A549 (cell line): ENCODE measurements at regions of chr17 and their contacts with region 1.

Region 1: DNA sequence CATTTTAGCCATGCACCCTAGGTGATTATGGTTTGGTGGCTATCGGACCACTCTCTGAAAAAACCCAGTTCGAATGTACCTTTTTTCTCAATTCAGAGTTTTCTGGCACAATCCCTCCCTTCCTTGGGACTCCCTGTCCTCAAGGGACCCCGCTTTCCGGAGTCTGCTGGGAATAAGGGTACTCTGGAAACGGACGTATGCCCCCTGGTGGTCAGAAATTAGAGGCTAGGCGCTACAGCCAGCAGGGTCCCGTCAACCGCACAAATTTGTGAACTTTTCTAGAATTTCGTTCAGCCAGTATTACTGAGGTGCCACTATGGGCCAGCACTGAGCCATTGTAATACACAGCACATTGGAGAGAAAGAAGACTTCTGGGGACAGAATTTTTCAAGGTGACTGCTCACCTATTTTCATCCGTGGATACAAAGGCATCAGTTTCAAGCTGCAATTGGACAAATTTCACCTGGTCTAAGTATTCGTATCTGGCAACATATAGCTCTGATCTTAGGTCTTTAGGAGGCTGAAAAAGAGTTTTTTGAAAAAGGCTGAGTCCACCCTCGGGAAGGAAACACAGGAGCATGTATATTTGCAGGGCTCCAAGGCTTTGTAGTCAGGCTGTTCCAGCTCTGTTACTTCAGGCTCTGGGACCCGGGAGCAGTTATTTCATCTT is 27.1 kb upstream of the CRYBA1 start:
- DNase-seq: peak; percentile 86 to 97
- ATAC-seq: peak; percentile 97 to 99
- H3K4me3 ChIP-seq: no peak overlapping the region
- H3K27ac ChIP-seq: peak overlapping the region; percentile 5 to 67; a peak in 3 of 6 replicates
- H3K4me1 ChIP-seq: 0 out of 3 replicates have a peak, but pooled peaks cover 6% of the 10 kb centered on the region
- CTCF ChIP-seq: peak; percentile 99
- EP300 ChIP-seq: no peak
- POLR2A ChIP-seq: no peak
- RAD21 ChIP-seq: peak; percentile 87 to 94

Region 2: GRCh38 chr17:28371245-28372202 is 848.0 kb before region 1 on chr17 and contains the start of gene SARM1:
- CTCF ChIA-PET with region 1: no interaction called
- POLR2A ChIA-PET with region 1: no interaction called
- DNase-seq: peak; percentile 94 to 95
- ATAC-seq: peak; percentile 71 to 90
- H3K4me3 ChIP-seq: peak within 1 kb of the TSS; percentile 57
- H3K27ac ChIP-seq: peak within 1 kb of the TSS; percentile 83 to 87
- H3K4me1 ChIP-seq: peaks cover 30% of the 10 kb centered on the region
- CTCF ChIP-seq: no peak
- EP300 ChIP-seq: no peak
- POLR2A ChIP-seq: peak; percentile 38
- RAD21 ChIP-seq: no peak
- polyA plus RNA-seq, gene SARM1: 4.0 and 4.8 TPM in 2 replicates

Region 3: GRCh38 chr17:28878981-28879380 is 340.5 kb before region 1 on chr17:
- CTCF ChIA-PET with region 1: no interaction called
- POLR2A ChIA-PET with region 1: no interaction called
- DNase-seq: peak; percentile 81 to 90
- ATAC-seq: peak; percentile 77 to 96
- H3K4me3 ChIP-seq: no peak overlapping the region
- H3K27ac ChIP-seq: no peak overlapping the region
- H3K4me1 ChIP-seq: no peaks in the 10 kb centered on the region
- CTCF ChIP-seq: peak; percentile 48
- EP300 ChIP-seq: no peak
- POLR2A ChIP-seq: no peak
- RAD21 ChIP-seq: peak; percentile 67 to 88

Region 4: GRCh38 chr17:29124117-29124924 is 95.2 kb before region 1 on chr17:
- CTCF ChIA-PET with region 1: interaction called, 81 read pairs
- POLR2A ChIA-PET with region 1: no interaction called
- DNase-seq: peak; percentile 82 to 83
- ATAC-seq: peak; percentile 83 to 93
- H3K4me3 ChIP-seq: no peak overlapping the region
- H3K27ac ChIP-seq: peak overlapping the region in 1 of 2 experiments; percentile 39; a peak in 3 of 6 replicates
- H3K4me1 ChIP-seq: peaks cover 16% of the 10 kb centered on the region
- CTCF ChIP-seq: peak; percentile 88
- EP300 ChIP-seq: no peak
- POLR2A ChIP-seq: no peak
- RAD21 ChIP-seq: peak; percentile 88 to 96

Region 5: DNA sequence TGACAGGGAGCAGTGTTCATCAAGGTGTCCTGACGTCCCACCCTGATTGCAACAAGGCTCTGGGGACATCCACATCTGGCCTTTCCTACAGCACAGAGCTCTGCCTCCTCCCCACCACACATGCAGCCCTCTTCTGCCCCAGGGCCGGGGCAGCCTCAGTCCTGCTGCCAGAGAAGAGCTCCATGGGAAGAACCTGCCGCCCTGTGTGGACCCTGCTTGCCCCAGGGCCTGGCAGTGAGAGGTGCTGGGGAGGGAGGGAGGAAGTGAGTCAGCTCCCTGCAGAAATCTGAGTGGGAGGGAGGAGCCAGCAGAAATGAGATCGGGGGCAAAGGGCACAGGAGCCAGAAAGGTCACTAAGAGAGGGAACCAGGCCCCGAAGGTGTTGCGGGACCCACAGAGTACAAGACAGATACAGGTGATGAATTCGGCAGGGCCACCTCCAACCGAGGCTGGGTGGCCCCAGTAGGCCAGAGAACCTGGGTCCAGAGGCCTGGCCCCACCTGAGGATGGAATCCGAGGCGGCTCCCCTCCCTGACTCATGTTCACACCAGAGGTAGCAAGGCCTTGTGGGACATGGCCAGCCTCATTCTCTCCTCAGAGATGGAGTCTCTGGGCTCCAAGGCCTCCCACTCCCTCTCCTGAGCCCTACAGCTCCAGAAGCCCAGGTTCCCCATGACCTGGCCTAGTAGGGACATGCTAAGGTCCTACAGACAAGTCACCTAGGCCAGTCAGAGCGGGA is 64.1 kb before region 1 on chr17:
- CTCF ChIA-PET with region 1: interaction called, 482 read pairs
- POLR2A ChIA-PET with region 1: no interaction called
- DNase-seq: peak; percentile 85 to 90
- ATAC-seq: peak; percentile 75 to 86
- H3K4me3 ChIP-seq: no peak overlapping the region
- H3K27ac ChIP-seq: peak overlapping the region; percentile 81 to 94
- H3K4me1 ChIP-seq: peaks cover 95% of the 10 kb centered on the region
- CTCF ChIP-seq: no peak
- EP300 ChIP-seq: peak in 1 of 2 experiments; percentile 41; a peak in 1 of 5 replicates
- POLR2A ChIP-seq: peak; percentile 19; the same call in 1 of the 2 replicates
- RAD21 ChIP-seq: no peak

Region 6: DNA sequence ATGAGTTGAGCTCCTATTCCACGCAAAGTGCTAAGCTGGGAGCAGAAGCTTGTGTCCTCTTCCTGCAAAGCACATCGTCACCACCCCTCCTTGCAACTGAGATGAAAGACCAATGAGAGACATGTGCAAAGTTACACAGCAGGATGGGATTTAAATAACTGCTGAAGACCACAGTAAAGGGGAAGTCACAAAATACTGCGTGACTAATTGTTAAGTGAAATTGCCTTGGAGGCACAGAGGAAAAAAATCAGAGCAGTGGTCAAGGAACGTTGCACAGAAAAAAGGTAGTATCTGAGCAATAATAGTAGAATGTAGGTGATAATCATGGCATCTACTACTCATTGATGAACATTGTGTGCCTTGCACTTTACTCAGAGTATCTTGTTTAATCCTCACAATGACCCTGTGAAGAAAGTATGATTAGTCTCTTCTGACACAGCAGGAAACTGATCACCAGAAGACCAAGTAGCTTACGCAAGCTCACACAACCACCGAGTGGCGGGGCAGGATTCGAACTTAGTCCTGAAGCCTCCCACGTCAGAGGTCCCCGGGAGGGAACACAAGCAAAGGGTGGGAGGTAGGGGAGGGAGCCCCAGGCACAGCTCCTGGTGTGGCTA is 23.9 kb before region 1 on chr17:
- CTCF ChIA-PET with region 1: interaction called, 158 read pairs
- POLR2A ChIA-PET with region 1: no interaction called
- DNase-seq: no peak
- ATAC-seq: no peak
- H3K4me3 ChIP-seq: no peak overlapping the region
- H3K27ac ChIP-seq: no peak overlapping the region
- H3K4me1 ChIP-seq: no peaks in the 10 kb centered on the region
- CTCF ChIP-seq: no peak
- EP300 ChIP-seq: no peak
- POLR2A ChIP-seq: no peak
- RAD21 ChIP-seq: no peak

Region 7: DNA sequence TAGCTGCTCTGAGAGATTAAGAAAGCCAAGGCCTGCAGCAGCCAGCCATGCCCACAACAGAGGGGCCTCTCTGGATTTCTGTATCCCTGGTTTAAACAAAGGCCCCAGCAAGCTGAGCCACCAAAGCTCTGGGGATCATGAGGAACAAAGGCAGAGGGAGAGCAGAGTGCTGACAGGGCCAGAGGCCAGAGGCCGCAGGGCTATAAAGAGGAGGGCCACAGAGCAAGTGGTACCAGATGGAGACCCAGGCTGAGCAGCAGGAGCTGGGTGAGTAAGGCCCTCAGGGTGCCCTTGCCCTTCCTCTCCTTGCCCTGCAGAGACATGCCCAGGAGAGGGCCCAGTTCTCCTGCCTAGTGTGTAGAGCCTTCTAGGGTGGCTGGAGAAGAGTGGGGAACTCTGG is 27.1 kb after region 1 on chr17 and contains the start of gene CRYBA1:
- CTCF ChIA-PET with region 1: interaction called, 81 read pairs
- POLR2A ChIA-PET with region 1: no interaction called
- DNase-seq: no peak
- ATAC-seq: peak; percentile 38 to 41; a peak in 4 of 6 replicates
- H3K4me3 ChIP-seq: no peak within 1 kb of the TSS
- H3K27ac ChIP-seq: peak within 1 kb of the TSS; percentile 12 to 73; a peak in 4 of 6 replicates
- H3K4me1 ChIP-seq: peaks cover 23% of the 10 kb centered on the region
- CTCF ChIP-seq: no peak
- EP300 ChIP-seq: no peak
- POLR2A ChIP-seq: no peak
- RAD21 ChIP-seq: no peak
- polyA plus RNA-seq, gene CRYBA1: 0.10 TPM in 1 of 2 replicates, not detected in the other

Region 8: DNA sequence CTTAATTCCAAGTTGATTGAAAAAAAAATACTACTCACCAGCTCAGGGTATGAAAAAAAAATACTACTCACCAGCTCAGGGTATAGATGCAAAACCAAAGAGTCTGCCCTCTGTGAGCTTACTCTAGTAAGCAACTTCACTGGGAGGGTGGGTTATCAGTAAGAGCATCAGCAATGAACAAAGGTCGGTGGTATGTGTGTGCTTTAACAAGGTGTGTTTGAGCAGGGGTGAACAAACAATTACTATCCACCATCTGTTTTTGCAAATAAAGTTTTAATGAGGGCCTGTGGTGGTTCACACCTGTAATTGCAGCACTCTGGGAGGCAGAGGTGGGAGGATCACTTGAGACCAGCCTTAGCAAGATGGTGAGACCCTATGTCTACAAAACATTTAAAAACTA is 54.4 kb after region 1 on chr17:
- CTCF ChIA-PET with region 1: interaction called, 11 read pairs
- POLR2A ChIA-PET with region 1: no interaction called
- DNase-seq: no peak
- ATAC-seq: no peak
- H3K4me3 ChIP-seq: no peak overlapping the region
- H3K27ac ChIP-seq: no peak overlapping the region
- H3K4me1 ChIP-seq: peaks cover 12% of the 10 kb centered on the region; the same call in 2 of the 3 replicates
- CTCF ChIP-seq: no peak
- EP300 ChIP-seq: no peak
- POLR2A ChIP-seq: no peak
- RAD21 ChIP-seq: no peak

Region 9: DNA sequence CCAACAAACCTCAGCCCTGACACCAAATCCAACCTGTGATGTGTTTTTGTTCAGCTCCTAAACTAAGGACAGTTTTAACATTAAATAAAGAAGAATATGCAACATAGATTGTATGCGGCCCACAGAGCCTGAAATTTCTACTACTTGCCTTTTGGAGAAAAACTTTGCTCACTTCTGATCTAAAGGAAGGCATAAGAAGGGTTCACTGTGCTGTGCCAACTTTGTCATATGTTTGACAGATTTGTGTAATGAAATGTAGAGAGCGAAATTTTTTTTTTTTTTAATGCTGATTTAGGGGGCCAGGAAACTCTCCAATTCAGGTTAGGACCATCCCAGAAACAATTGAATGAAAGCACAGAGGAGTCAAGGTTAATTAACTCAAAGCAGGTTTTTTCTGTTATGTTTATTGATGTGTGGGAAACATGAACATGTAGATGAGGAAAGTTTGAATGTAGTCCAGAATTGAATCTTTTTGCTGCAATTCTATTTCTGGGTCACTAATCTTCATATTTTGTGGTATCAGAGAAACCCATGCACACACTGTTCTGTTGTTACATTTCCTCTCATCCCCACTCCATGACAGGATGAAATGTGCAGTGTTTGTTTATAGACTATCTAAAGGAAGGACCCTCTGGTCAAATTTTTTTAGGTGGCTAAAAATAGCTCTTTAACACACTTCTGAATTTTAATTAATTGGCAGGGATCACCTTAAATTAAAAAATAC is 242.1 kb after region 1 on chr17:
- CTCF ChIA-PET with region 1: no interaction called
- POLR2A ChIA-PET with region 1: no interaction called
- DNase-seq: no peak
- ATAC-seq: no peak
- H3K4me3 ChIP-seq: no peak overlapping the region
- H3K27ac ChIP-seq: no peak overlapping the region
- H3K4me1 ChIP-seq: no peaks in the 10 kb centered on the region
- CTCF ChIP-seq: no peak
- EP300 ChIP-seq: no peak
- POLR2A ChIP-seq: no peak
- RAD21 ChIP-seq: no peak